Esophagus muscularis mucosa (tissue), 4 donors: ENCODE measurements at regions of chr5 and their contacts with region 1.

Region 1: GRCh38 chr5:163503106-163504078 is 2.0 kb upstream of the MAT2B start:
- DNase-seq: peak; percentile 95
- H3K4me3 ChIP-seq: peak overlapping the region; percentile 65 to 87 (median 83)
- H3K27ac ChIP-seq: peak overlapping the region; percentile 92 to 98 (median 97)
- H3K4me1 ChIP-seq: peaks cover 10 to 47% (median 39%) of the 10 kb centered on the region in 4 donors
- H3K27me3 ChIP-seq: no peaks in the 10 kb centered on the region
- CTCF ChIP-seq: peak; percentile 28 to 46 (median 33)
- EP300 ChIP-seq: no peak
- POLR2A ChIP-seq: no peak

Region 2: GRCh38 chr5:163379298-163380155 is 123.9 kb before region 1 on chr5:
- intact Hi-C with region 1: no loop called
- DNase-seq: no peak
- H3K4me3 ChIP-seq: no peak overlapping the region
- H3K27ac ChIP-seq: no peak overlapping the region
- H3K4me1 ChIP-seq: no peaks in the 10 kb centered on the region
- H3K27me3 ChIP-seq: no peaks in the 10 kb centered on the region
- CTCF ChIP-seq: no peak
- EP300 ChIP-seq: no peak
- POLR2A ChIP-seq: no peak

Region 3: DNA sequence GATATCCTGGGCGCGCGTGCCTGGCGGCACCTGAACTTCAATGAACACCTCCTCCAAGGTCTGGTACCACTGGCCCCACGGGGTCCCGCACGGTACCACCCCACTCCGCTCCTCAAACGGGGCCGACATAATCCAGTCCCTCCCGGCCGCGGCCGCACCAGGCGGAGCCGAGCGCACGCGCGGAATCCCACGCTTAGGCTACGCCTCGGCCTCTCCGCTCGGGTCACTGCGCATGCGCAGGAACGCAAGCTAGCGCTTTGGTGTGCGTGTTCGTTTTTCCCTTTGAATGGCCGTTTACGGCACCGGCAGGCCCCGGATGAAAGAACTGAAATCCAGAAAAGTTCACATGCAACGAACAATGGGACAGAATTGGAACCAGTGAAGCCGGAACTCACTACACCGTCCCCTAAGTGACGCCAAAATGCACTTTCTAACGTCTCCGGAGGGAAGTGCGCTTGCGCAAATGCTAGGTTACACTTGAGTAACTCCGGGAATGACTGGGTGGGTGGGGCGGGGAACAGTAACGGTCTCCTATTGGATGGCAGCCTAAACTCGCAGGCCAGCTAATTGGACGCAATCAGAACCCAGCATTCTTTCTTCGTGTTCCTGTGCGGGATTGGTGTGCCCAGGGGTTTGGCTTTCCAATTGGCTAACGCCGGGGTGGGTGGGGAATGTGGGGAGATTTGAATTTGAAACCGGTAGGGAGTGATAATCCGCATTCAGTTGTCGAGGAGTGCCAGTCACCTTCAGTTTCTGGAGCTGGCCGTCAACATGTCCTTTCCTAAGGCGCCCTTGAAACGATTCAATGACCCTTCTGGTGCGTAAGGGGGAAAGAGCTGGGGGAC is 43.2 kb before region 1 on chr5 and contains the starts of genes HMMR and NUDCD2:
- intact Hi-C with region 1: loop called (anchors 5 kb)
- DNase-seq: peak; percentile 99
- H3K4me3 ChIP-seq: peak within 1 kb of the TSS; percentile 78 to 87 (median 84)
- H3K27ac ChIP-seq: peak within 1 kb of the TSS; percentile 92 to 98 (median 96)
- H3K4me1 ChIP-seq: peaks cover 18 to 36% (median 32%) of the 10 kb centered on the region in 4 donors
- H3K27me3 ChIP-seq: no peaks in the 10 kb centered on the region
- CTCF ChIP-seq: peak in 2 of 3 experiments; percentile 26 to 28
- EP300 ChIP-seq: no peak
- POLR2A ChIP-seq: peak; percentile 64
- total RNA-seq, gene HMMR: 0.17 to 0.57 (median 0.26) TPM in 3 of 4 donors, not detected in the other
- total RNA-seq, gene NUDCD2: 7.6 to 12.5 (median 9.7) TPM